ENCODE measurements at regions of chr16 and their contacts with region 1.

Region 1: DNA sequence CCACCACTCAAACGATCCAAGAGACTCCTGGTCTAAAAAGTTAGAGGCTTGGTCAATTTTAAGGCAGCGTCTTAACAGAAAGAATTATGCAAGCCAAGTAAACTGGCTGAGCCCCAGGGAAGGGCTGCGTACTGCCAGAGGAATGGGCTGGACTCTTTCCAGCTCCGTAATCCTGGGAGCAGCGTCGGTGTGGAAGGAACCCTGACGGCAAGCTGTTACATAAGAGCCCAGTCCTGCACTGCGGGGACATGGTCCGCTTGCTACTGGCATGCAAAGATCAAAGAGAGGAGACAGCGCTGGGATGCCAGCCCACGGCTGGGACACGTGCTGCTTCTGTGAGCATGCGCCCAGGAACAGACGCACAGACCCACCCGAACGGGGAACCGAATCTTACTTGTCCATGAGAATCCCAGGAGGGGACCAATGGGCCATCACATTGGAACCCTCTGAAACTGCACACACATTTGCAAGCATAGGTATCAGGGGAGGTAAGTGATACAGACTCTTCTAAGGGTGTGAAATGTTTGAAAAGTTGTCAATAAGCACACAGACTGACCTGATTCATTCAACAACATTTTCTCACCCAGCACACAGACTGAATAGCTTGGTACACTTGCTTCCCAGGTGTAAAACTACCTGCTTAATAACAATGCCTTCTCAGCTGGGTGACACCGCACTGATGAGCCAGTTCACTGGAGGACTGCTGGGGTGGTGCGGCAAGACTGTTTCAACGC is 95.1 kb downstream of the ANKRD11 start:
- DNase-seq: peak; percentile 83 to 93
- ATAC-seq: peak; percentile 91 to 92
- H3K4me3 ChIP-seq: no peak overlapping the region
- H3K27ac ChIP-seq: peak overlapping the region; percentile 54 to 74 (median 69)
- H3K4me1 ChIP-seq: peaks cover 56 to 66% of the 10 kb centered on the region in 2 donors
- H3K27me3 ChIP-seq: no peaks in the 10 kb centered on the region
- CTCF ChIP-seq: no peak
- POLR2A ChIP-seq: no peak

Region 2: DNA sequence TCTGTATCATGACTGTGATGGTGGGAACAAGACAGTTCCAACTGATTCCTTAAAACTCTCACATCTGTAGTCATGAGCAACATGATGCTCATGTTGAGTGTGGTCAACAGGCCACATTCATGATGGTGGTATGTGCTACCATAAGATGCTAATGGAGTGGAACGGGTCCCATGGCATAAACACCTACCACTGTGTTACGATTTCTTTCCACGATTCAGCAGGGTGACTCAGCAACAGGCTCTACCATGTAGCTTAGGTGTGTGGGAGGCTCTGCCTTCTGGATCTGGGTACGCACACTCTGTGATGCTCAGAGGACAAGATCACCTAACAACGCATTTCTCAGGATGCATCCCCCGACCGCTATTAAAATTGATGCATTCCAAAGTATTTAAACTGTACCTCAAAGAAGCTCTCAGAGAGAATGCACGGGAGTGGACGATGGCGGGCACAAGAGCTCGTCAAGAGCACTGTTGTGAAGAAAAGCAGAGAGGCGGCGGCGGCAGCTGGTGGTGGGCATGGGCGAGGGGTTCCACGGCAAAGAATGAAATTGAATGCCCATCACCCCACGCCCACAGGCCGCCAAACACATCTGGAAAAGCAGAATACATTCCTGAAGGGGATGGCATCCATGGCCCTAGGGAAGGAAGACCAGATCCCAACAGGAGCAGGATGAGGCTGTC is 44.5 kb before region 1 on chr16:
- in situ Hi-C with region 1: no loop called
- intact Hi-C with region 1: loop called (anchors 5 kb)
- DNase-seq: no peak
- ATAC-seq: no peak
- H3K4me3 ChIP-seq: no peak overlapping the region
- H3K27ac ChIP-seq: peak overlapping the region in 2 of 4 donors; percentile 5 to 23
- H3K4me1 ChIP-seq: peaks cover 35 to 45% of the 10 kb centered on the region in 2 donors
- H3K27me3 ChIP-seq: no peaks in the 10 kb centered on the region
- CTCF ChIP-seq: no peak
- POLR2A ChIP-seq: no peak

Region 3: DNA sequence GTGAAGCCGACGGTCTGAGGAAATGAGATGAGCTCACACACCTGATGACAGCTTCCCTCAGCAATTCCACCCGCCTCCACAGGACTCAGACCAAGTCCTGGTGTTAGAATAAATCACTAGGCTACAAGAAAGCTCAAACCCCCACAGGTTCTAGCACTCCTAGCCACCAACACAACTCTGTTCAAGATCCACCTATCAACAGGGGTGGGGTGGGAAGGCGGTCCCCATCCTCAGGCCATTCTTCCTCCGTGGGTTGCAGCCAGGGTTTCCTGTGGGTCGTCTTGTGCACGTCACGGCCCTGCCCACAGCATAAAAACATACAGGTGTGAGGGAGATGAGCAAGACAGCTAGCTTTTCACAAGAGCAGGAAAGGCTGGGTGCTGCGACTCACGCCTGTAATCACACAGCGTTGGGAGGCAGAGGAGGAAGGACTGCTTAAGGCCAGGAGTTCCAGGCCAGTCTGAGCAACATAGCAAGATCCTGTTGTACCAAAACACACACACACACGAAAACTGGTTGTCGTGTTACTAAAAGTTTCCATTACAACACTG is 13.9 kb after region 1 on chr16:
- in situ Hi-C with region 1: no loop called
- intact Hi-C with region 1: loop called (anchors 2 kb)
- DNase-seq: no peak
- ATAC-seq: no peak
- H3K4me3 ChIP-seq: no peak overlapping the region
- H3K27ac ChIP-seq: peak overlapping the region; percentile 65 to 82 (median 76)
- H3K4me1 ChIP-seq: peaks cover 92 to 97% of the 10 kb centered on the region in 2 donors
- H3K27me3 ChIP-seq: no peaks in the 10 kb centered on the region
- CTCF ChIP-seq: no peak
- POLR2A ChIP-seq: no peak

Measured in gastrocnemius medialis (tissue), 4 donors.